Mammary epithelial cell (primary cell): ENCODE measurements at regions of chr19 and their contacts with region 1.

Region 1: GRCh38 chr19:57240311-57241090 is at the start of gene ZNF805:
- DNase-seq: peak; percentile 92
- H3K4me3 ChIP-seq: peak within 1 kb of the TSS; percentile 62 to 94 (median 81)
- H3K27ac ChIP-seq: peak within 1 kb of the TSS; percentile 87
- H3K4me1 ChIP-seq: peaks cover 15% of the 10 kb centered on the region
- H3K27me3 ChIP-seq: no peaks in the 10 kb centered on the region
- CTCF ChIP-seq: peak in 1 of 2 donors; percentile 3
- total RNA-seq, gene ZNF805: 13.5 to 37.5 TPM

Region 2: DNA sequence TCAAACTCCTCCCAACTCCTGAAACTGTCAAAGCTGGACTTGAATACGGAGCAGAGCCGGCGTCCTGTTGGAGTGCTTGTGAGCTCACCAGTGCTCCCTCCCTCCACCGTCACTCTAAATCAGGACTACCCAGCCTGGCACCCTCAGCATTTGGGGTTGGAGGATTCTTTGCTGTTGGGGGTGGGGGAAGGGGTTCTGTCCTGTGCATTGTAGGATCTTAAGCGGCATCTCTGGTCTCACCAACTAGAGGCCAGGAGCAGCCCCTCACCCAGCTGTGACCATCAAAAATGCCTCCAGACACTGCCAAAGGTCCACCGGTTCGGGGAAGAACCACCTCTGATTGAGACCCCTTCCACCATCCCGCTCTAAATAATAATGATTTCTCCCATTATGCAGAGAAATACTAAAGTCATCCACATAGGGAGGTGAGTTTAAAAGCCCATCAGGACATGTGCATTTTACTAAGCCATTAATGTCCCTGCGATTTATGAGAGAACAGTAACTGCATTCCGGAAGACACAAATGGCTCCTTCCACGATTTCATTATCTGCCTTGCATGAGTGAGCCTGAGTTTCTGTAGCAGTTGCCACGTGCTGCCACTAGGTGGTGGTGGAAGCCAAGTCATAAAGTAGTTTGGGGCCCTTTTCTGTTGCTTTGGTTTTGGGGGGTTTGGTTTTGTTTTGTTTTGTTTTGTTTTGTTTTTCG is 136.8 kb before region 1 on chr19:
- CTCF ChIA-PET with region 1: no interaction called
- dilution Hi-C with region 1: no loop called
- in situ Hi-C with region 1: no loop called
- intact Hi-C with region 1: loop called (anchors 2 kb)
- DNase-seq: peak; percentile 46
- H3K4me3 ChIP-seq: peak overlapping the region; percentile 11 to 25 (median 17)
- H3K27ac ChIP-seq: no peak overlapping the region
- H3K4me1 ChIP-seq: peaks cover 6% of the 10 kb centered on the region
- H3K27me3 ChIP-seq: no peaks in the 10 kb centered on the region
- CTCF ChIP-seq: peak; percentile 90 to 91

Region 3: DNA sequence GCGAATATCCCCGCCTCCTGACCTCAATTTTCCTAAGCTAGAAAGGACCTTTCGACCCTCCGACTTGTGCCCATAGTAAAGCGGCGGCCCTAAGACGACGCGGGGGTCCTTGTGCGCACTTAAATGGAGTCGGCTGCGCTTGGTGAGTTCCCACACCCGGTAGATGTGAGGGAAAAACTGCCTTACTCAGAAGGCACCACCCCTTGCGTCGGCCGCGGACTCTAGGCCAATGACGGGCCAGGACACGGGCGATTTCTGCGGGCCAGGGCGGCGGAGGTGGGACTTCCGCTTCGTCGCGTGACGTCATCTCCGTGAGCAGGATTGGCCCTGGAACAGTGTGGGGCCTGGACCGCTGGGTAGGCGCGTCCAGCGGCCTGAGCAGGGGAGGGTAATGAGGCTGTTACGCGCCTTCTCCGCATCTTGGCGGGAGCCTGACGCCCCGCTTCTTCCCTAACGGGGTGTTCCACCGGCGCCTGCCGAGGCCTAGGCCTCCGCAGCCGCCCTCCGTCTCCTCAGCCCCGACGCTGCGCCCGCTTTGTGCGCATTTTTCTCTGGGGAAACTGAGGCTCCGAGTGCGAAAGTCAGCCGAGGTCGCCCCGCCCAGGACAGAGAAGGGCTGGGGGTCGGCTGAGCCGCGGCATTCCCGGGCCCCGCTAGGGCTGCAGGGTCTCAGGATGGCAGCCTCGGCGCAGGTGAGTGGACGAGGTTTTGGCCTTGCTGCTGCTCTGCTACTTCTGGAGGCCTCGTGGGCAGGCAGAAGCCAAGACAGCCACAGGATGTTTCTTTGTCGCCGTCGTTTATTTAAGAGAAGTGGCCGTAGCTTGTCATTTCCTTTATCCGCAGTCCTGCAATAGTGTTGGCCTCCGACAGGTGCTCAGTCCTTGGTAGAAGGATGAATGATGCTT is 79.9 kb after region 1 on chr19 and contains the start of gene ZNF543:
- CTCF ChIA-PET with region 1: no interaction called
- dilution Hi-C with region 1: no loop called
- in situ Hi-C with region 1: no loop called
- intact Hi-C with region 1: loop called (anchors 1 kb)
- DNase-seq: peak; percentile 96
- H3K4me3 ChIP-seq: peak within 1 kb of the TSS; percentile 81 to 96 (median 90)
- H3K27ac ChIP-seq: peak within 1 kb of the TSS; percentile 72
- H3K4me1 ChIP-seq: peaks cover 14% of the 10 kb centered on the region
- H3K27me3 ChIP-seq: no peaks in the 10 kb centered on the region
- CTCF ChIP-seq: peak in 1 of 2 donors; percentile 4
- total RNA-seq, gene ZNF543: 7.4 to 15.2 TPM

Region 4: DNA sequence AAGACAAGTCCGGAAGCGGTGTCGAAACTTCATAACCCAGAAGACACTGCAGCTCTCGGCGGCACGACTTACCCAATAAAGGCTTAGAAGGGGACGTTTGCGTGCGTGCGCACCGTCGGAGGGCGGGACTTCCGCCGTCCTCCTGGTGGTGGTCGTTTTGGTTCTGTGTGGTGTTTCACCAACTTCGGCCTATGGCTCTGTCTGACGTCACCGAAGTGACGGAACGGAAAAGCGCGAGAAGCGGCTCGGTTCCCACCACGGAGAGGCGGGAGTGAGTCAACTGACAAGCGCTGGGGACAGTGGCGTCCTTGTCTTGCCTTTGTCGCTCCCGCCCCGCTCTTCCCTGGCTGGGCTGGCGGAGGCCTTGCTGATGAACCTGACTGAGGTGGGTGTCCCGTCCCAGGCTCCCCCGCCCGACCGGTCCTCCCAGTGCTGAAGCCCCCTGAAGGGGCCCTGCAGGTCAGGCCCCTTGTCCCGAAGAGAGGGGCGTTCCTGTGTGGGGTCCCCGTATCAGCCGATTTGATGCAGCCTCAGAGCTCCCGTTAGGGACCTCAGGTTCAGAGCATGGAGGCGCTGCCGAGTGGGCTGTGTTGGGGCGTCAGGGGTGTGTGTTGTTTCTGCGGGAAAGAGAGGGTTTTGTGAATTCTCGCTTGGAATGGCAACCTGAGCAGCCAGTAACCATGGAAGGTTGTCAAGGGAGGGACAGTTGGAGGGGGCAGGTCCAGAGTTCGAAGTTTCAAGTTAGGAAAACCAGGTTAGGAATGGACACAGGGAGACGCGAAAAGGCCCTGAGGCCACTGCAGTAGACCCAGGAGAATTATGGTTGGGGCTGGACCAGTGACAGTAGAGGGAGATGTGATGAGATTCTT is 149.5 kb after region 1 on chr19 and contains the start of gene ZNF548:
- CTCF ChIA-PET with region 1: no interaction called
- dilution Hi-C with region 1: no loop called
- in situ Hi-C with region 1: no loop called
- intact Hi-C with region 1: loop called (anchors 1 kb)
- DNase-seq: peak; percentile 96
- H3K4me3 ChIP-seq: peak within 1 kb of the TSS; percentile 83 to 88 (median 84)
- H3K27ac ChIP-seq: peak within 1 kb of the TSS; percentile 88
- H3K4me1 ChIP-seq: peaks cover 9% of the 10 kb centered on the region
- H3K27me3 ChIP-seq: no peaks in the 10 kb centered on the region
- CTCF ChIP-seq: peak in 1 of 2 donors; percentile 30
- total RNA-seq, gene ZNF548: 15.2 to 25.8 TPM

Region 5: GRCh38 chr19:57537953-57538547 is 297.5 kb after region 1 on chr19:
- CTCF ChIA-PET with region 1: no interaction called
- dilution Hi-C with region 1: no loop called
- in situ Hi-C with region 1: no loop called
- intact Hi-C with region 1: no loop called
- DNase-seq: no peak
- H3K4me3 ChIP-seq: no peak overlapping the region
- H3K27ac ChIP-seq: no peak overlapping the region
- H3K4me1 ChIP-seq: no peaks in the 10 kb centered on the region
- H3K27me3 ChIP-seq: no peaks in the 10 kb centered on the region
- CTCF ChIP-seq: no peak

Region 6: GRCh38 chr19:57746580-57747471 is 506.3 kb after region 1 on chr19 and contains the start of gene ZNF776:
- CTCF ChIA-PET with region 1: no interaction called
- dilution Hi-C with region 1: no loop called
- in situ Hi-C with region 1: no loop called
- intact Hi-C with region 1: no loop called
- DNase-seq: peak; percentile 90
- H3K4me3 ChIP-seq: peak within 1 kb of the TSS; percentile 78 to 96 (median 89)
- H3K27ac ChIP-seq: peak within 1 kb of the TSS; percentile 58
- H3K4me1 ChIP-seq: peaks cover 7% of the 10 kb centered on the region
- H3K27me3 ChIP-seq: no peaks in the 10 kb centered on the region
- CTCF ChIP-seq: no peak
- total RNA-seq, gene ZNF776: 7.7 to 13.0 TPM